PC-3 (cell line): ENCODE measurements at regions of chr11 and their contacts with region 1.

Region 1: GRCh38 chr11:46630237-46630636 is 12.9 kb downstream of the ATG13 start:
- DNase-seq: no peak
- ATAC-seq: no peak
- H3K4me3 ChIP-seq: no peak overlapping the region
- H3K27ac ChIP-seq: no peak overlapping the region
- H3K4me1 ChIP-seq: no peaks in the 10 kb centered on the region
- H3K27me3 ChIP-seq: no peaks in the 10 kb centered on the region
- CTCF ChIP-seq: no peak

Region 2: GRCh38 chr11:46641639-46642038 is 11.4 kb after region 1 on chr11:
- CTCF ChIA-PET with region 1: no interaction called
- POLR2A ChIA-PET with region 1: interaction called, 11 read pairs
- intact Hi-C with region 1: no loop called
- DNase-seq: no peak
- ATAC-seq: no peak
- H3K4me3 ChIP-seq: no peak overlapping the region
- H3K27ac ChIP-seq: no peak overlapping the region
- H3K4me1 ChIP-seq: no peaks in the 10 kb centered on the region
- H3K27me3 ChIP-seq: no peaks in the 10 kb centered on the region
- CTCF ChIP-seq: no peak

Region 3: DNA sequence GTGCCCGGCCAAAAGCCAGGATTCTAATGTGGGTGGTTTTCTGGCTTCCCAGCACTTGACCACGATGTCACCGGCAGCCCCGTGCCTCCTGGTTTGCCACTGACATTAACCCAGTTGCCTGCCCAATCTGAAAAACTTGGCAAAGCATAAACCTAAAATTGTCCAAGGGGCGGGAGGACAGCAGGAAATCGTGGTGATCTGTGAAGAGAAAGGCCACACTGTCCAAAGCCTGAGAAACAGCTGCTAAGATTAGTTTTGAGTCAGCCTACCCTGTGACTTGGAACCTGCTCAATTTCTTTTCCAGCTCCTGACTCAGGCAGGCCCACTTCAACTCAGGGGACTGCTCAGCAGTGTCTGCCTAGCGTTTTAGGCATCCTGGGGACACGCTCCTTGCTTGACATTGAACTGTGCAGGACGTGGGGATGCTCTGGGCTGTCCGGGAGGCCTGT is 80.6 kb after region 1 on chr11:
- CTCF ChIA-PET with region 1: no interaction called
- POLR2A ChIA-PET with region 1: no interaction called
- intact Hi-C with region 1: no loop called
- DNase-seq: peak; percentile 43
- ATAC-seq: peak; percentile 85
- H3K4me3 ChIP-seq: no peak overlapping the region
- H3K27ac ChIP-seq: peak overlapping the region; percentile 28
- H3K4me1 ChIP-seq: peaks cover 12% of the 10 kb centered on the region
- H3K27me3 ChIP-seq: no peaks in the 10 kb centered on the region
- CTCF ChIP-seq: no peak